Right ventricle myocardium superior (tissue), 1 donor: ENCODE measurements at regions of chr16 and their contacts with region 1.

Region 1: GRCh38 chr16:85245307-85246172 is 133.3 kb upstream of the CIBAR2 start:
- DNase-seq: peak; percentile 69
- ATAC-seq: peak; percentile 80

Region 2: DNA sequence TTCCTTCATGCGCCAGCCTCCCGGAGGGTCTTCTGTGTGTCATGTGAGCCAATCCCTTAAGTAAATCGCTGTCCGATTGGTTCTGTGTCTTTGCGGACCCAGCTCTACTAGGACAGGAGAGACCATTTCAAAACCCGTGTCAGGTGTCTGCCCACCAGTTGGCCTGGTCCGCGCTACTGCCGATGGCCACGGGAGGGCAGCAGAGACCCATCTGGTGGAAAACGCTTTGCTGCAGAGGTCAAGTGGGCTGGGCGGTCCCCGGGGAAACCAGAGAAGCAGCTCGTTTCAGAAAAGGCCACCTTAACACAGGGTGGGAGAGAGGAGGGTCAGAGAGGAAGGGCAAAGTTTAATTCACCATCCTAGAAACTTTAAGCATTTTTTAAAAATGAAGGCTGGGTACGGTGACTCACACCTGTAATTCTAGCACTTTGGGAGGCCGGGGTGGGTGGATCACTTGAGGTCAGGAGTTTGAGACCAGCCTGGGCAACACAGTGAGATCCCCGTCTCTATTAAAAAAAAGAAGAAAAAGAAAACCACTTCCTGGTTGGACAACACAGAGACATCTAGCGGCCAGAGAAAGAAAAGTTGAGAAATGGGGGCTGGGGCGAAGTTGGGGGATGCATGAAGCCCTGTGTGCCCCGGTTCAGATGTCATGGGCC is 130.5 kb before region 1 on chr16:
- intact Hi-C with region 1: loop called (anchors 5 kb)
- DNase-seq: peak; percentile 93
- ATAC-seq: peak; percentile 96

Region 3: GRCh38 chr16:85172455-85173145 is 72.9 kb before region 1 on chr16:
- intact Hi-C with region 1: no loop called
- DNase-seq: peak; percentile 69
- ATAC-seq: peak; percentile 57

Region 4: GRCh38 chr16:85420501-85421337 is 175.2 kb after region 1 on chr16:
- intact Hi-C with region 1: no loop called
- DNase-seq: peak; percentile 76
- ATAC-seq: peak; percentile 67